ENCODE measurements at regions of chr4 and their contacts with region 1.

Region 1: DNA sequence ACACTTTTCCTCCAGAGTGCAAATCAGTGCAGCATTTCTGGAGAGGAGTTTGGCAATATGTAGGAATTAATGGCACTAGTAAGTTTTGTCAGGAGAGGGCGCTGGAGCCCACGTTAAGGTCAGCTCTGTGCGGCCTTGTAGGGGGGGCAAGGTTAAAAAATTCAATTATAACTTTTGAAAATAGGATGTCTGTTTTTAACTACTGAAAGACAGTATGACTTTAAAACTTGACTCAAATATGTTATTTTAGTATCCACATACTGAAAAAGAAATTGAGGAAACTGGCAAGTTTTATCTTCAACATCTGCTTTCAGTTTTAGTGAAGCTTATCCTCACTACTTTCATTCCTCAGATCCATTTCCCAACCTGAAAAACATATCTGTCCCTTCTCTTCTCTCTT is 30.9 kb upstream of the HSD17B13 start:
- DNase-seq: peak; percentile 39
- H3K4me3 ChIP-seq: no peak overlapping the region
- H3K27ac ChIP-seq: no peak overlapping the region
- H3K4me1 ChIP-seq: no peaks in the 10 kb centered on the region
- H3K27me3 ChIP-seq: no peaks in the 10 kb centered on the region
- CTCF ChIP-seq: peak; percentile 57

Region 2: DNA sequence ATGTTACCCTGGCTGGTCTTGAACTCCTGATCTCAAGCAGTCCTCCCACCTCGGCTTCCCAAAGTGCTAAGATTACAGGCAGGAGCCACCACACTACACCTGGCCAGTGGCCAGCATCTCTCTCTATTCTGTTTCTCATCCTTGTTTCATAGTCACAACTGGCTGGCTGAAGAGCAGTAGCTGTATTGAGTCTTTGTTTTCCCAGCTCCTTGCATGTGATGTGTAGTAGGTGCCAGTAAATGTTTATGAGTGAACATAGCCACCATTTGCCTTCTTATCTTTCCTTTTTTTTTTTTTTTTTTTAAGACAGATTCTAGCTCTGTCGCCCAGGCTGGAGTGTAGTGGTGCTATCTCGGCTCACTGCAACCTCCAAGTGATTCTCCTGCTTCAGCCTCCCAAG is 92.4 kb after region 1 on chr4:
- CTCF ChIA-PET with region 1: interaction called, 10 read pairs
- POLR2A ChIA-PET with region 1: no interaction called
- intact Hi-C with region 1: no loop called
- DNase-seq: no peak
- H3K4me3 ChIP-seq: no peak overlapping the region
- H3K27ac ChIP-seq: no peak overlapping the region
- H3K4me1 ChIP-seq: no peaks in the 10 kb centered on the region
- H3K27me3 ChIP-seq: no peaks in the 10 kb centered on the region
- CTCF ChIP-seq: no peak

Region 3: GRCh38 chr4:87530868-87531267 is 177.3 kb after region 1 on chr4:
- CTCF ChIA-PET with region 1: no interaction called
- POLR2A ChIA-PET with region 1: no interaction called
- intact Hi-C with region 1: no loop called
- DNase-seq: no peak
- H3K4me3 ChIP-seq: no peak overlapping the region
- H3K27ac ChIP-seq: no peak overlapping the region
- H3K4me1 ChIP-seq: peaks cover 50% of the 10 kb centered on the region
- H3K27me3 ChIP-seq: no peaks in the 10 kb centered on the region
- CTCF ChIP-seq: no peak